ENCODE measurements at regions of chr1 and their contacts with region 1.

Region 1: GRCh38 chr1:18037651-18038441 is 69.8 kb upstream of the IGSF21 start:
- DNase-seq: peak; percentile 48
- H3K4me3 ChIP-seq: no peak overlapping the region
- H3K27ac ChIP-seq: no peak overlapping the region
- H3K4me1 ChIP-seq: peaks cover 35% of the 10 kb centered on the region
- CTCF ChIP-seq: no peak

Region 2: DNA sequence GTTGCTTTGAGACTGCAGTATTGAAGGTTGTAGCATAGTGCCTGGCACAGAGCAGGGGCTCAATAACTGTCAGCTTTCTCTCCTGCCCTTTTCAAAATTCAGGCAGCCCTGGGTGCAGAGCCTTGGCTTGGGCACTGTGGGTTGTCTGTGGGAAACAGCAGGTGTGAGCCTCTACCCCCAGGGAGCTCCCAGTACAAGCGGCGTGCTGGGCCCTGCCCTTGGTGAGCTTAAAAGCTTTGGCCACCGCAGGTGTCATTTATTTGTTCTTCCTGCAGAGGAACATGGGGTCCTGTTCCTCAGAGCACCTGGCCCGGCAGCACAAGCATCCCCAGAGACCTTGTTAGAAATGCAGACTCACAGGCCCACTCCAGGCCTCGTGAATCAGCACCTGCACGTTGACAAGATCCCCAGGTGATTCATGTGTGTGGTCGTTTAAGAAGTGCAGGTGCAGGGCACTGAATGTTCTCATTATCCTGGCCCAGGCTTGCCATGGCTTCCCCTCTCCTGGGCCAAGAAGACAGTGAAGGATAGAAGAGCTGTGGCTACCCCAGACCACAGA is 39.9 kb after region 1 on chr1:
- CTCF ChIA-PET with region 1: no interaction called
- POLR2A ChIA-PET with region 1: interaction called, 3 read pairs
- intact Hi-C with region 1: loop called (anchors 1 kb)
- DNase-seq: peak; percentile 82
- H3K4me3 ChIP-seq: no peak overlapping the region
- H3K27ac ChIP-seq: no peak overlapping the region
- H3K4me1 ChIP-seq: peaks cover 19% of the 10 kb centered on the region
- CTCF ChIP-seq: no peak

Region 3: DNA sequence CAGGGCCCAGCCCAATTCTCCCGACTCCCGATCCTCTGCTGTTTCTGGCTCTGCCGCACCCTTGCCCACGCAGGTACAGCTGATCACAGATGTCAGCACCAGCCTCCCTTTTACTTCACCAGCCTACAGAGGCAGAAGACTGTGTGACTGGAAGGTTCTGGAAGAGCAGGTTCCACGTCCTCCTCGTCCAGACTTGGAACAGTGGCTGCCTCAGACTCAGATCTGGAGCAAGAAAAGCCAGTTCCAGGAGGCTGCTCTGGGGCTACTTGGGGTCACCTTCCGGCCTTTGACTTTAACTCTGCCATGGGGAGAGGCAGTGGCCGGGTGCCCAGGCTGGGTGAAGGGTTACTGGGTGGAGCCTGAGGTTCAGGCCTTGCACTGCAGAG is 426.8 kb after region 1 on chr1:
- CTCF ChIA-PET with region 1: no interaction called
- POLR2A ChIA-PET with region 1: no interaction called
- intact Hi-C with region 1: no loop called
- DNase-seq: no peak
- H3K4me3 ChIP-seq: no peak overlapping the region
- H3K27ac ChIP-seq: no peak overlapping the region
- H3K4me1 ChIP-seq: no peaks in the 10 kb centered on the region
- CTCF ChIP-seq: no peak